Vagina (tissue), 2 donors: ENCODE measurements at regions of chr14 and their contacts with region 1.

Region 1: DNA sequence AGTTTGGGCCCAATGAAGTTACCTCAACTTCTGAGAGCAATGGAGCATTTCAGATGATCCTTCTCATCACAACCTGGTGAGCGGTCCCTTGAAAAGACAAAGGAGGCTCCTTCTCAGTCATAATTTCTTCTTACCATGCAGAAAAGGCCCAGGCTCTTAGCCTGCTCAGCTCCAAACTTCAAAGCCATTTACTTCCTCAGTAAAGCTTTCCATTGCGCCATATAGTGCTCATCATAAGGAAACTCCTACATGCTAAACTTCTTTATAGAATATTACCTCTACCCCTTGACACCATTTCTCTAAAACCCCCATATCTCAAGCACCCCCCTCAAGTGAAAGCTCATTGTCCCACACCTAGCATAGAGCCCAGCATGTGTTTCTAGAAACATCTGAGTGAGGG is 127.1 kb downstream of the GTF2A1 start:
- DNase-seq: no peak
- H3K4me3 ChIP-seq: no peak overlapping the region
- H3K27ac ChIP-seq: no peak overlapping the region
- H3K4me1 ChIP-seq: no peaks in the 10 kb centered on the region
- H3K27me3 ChIP-seq: no peaks in the 10 kb centered on the region
- CTCF ChIP-seq: no peak
- POLR2A ChIP-seq: no peak

Region 2: DNA sequence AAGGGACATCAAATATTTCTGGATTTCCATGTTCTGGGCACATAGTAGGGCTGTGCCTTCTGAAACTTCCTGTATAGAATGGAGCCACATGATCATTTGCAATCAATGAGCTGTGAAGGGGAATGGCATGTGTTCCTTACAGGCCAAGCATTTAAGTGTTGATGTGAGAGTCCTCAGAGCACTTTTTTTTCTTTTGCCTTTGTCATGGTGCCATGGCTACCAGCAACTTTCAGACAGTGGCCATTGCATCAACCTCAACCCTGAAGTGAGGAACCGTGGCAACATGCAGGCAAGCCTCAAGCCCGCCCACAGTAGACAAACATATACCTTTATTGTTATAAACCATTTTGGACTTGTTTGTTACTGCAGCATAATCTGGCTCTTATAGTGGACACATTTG is 1975.4 kb before region 1 on chr14:
- intact Hi-C with region 1: loop called (anchors 5 kb)
- DNase-seq: no peak
- H3K4me3 ChIP-seq: no peak overlapping the region
- H3K27ac ChIP-seq: no peak overlapping the region
- H3K4me1 ChIP-seq: no peaks in the 10 kb centered on the region
- H3K27me3 ChIP-seq: no peaks in the 10 kb centered on the region
- CTCF ChIP-seq: no peak
- POLR2A ChIP-seq: no peak

Region 3: GRCh38 chr14:81147140-81147897 is 53.7 kb after region 1 on chr14:
- intact Hi-C with region 1: no loop called
- DNase-seq: no peak
- H3K4me3 ChIP-seq: no peak overlapping the region
- H3K27ac ChIP-seq: no peak overlapping the region
- H3K4me1 ChIP-seq: peaks cover 6% of the 10 kb centered on the region
- H3K27me3 ChIP-seq: no peaks in the 10 kb centered on the region
- CTCF ChIP-seq: no peak
- POLR2A ChIP-seq: no peak

Region 4: DNA sequence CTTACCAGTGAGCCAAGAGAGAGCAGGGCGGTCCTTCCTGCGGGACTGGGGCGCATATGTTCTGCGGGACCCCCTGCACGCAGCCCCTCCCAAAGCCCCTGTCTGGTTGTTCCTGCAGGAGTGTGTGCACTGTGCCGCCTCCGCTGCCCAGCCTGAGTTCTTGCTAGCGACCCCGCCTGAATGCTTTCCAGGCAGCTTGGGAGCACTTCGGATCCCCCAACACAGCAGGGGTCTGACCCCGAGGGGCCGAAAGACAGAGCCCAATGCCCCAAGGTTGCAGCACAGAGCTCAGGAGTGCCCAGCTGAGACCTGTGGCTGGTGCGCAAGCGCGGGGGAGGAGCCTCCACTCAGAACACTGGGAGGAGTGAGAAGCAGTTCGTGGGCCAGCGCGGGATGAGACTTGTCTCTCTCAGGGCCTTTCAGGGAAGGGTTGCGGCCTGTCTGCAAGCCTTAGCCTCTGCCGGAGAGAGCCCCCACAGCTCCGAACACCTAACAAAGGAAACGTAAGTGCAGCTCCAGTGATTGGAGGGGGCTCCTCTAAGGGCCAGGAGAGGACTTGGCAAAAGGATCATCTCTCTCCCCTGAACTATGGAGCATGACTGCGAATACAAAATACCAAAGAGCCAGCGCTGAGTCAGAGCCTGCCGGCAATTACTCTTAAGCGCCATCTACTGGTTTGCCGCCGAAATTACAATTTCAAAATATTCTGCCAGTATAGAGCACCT is 76.6 kb after region 1 on chr14:
- intact Hi-C with region 1: no loop called
- DNase-seq: peak in 1 of 2 donors; percentile 95
- H3K4me3 ChIP-seq: peak overlapping the region; percentile 64 to 72
- H3K27ac ChIP-seq: peak overlapping the region; percentile 87
- H3K4me1 ChIP-seq: peaks cover 11% of the 10 kb centered on the region
- H3K27me3 ChIP-seq: no peaks in the 10 kb centered on the region
- CTCF ChIP-seq: peak; percentile 59 to 83 (median 67)
- POLR2A ChIP-seq: peak in 1 of 2 donors; percentile 57

Region 5: GRCh38 chr14:81220830-81221578 is 127.4 kb after region 1 on chr14 and contains the start of gene GTF2A1:
- intact Hi-C with region 1: no loop called
- DNase-seq: peak in 1 of 2 donors; percentile 99
- H3K4me3 ChIP-seq: peak within 1 kb of the TSS; percentile 83 to 85
- H3K27ac ChIP-seq: peak within 1 kb of the TSS; percentile 98
- H3K4me1 ChIP-seq: peaks cover 23% of the 10 kb centered on the region
- H3K27me3 ChIP-seq: no peaks in the 10 kb centered on the region
- CTCF ChIP-seq: no peak
- POLR2A ChIP-seq: peak in 1 of 2 donors; percentile 95
- total RNA-seq, gene GTF2A1: 21.6 TPM